CD8-positive, alpha-beta T cell (primary cell): ENCODE measurements at regions of chr4 and their contacts with region 1.

Region 1: DNA sequence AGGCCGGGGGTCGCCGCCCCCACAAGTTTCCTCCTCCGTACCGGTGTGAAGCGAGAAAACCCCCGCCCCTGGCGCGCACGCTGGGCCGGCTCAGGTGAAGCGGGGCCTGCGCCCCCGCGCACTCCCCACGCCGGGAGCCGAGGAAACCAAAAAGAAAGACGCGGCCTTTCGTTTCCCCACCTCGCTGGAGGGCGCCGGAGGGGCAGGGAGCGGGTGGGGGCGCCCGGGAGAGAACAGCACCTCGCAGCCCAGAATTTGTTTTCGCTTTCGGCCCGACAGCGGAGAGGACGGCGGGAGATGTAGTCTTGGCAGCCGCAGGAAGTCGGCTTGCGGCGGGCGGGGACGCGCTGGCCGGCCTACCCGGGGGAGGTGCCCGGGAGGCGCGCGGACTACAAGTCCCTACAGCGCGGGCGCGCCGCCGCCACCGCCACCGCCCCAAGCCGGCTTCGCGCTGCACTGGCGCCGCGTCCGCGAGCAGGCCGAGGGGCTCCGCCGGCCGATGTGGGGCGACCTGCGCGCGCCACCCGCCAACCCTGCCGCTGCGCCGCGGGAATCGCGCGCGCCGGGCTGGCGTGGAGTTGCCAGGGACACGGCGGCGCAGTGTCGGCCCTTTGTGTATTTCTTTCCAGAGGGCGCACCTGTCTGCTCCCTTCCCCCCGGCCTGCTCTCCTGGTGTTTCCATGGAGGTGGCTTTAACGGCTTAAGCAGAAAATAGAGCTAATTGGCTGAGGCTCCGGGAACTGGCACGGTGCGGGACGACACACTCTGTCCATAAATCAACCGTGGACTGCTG is at the start of gene OTUD4:
- DNase-seq: peak; percentile 91 to 98 (median 94)
- ATAC-seq: peak; percentile 82
- H3K4me3 ChIP-seq: peak within 1 kb of the TSS; percentile 69 to 79
- H3K4me3 Mint-ChIP-seq: peak within 1 kb of the TSS; percentile 93
- H3K27ac ChIP-seq: peak within 1 kb of the TSS; percentile 87 to 94
- H3K27ac Mint-ChIP-seq: peak within 1 kb of the TSS; percentile 96
- H3K4me1 ChIP-seq: peaks cover 27% of the 10 kb centered on the region
- H3K4me1 Mint-ChIP-seq: peaks cover 41% of the 10 kb centered on the region
- H3K27me3 ChIP-seq: no peaks in the 10 kb centered on the region
- H3K27me3 Mint-ChIP-seq: no peaks in the 10 kb centered on the region
- CTCF ChIP-seq: no peak
- total RNA-seq, gene OTUD4: 67.5 to 70.6 TPM

Region 2: GRCh38 chr4:143184217-143185116 is 1996.0 kb before region 1 on chr4 and contains the start of gene USP38:
- CTCF ChIA-PET with region 1: no interaction called
- POLR2A ChIA-PET with region 1: no interaction called
- intact Hi-C with region 1: loop called in 1 of 2 experiments (anchors 5 kb)
- DNase-seq: peak; percentile 69 to 94 (median 85)
- ATAC-seq: peak; percentile 82
- H3K4me3 ChIP-seq: peak within 1 kb of the TSS; percentile 48 to 86
- H3K4me3 Mint-ChIP-seq: peak within 1 kb of the TSS; percentile 90
- H3K27ac ChIP-seq: peak within 1 kb of the TSS; percentile 91 to 93
- H3K27ac Mint-ChIP-seq: peak within 1 kb of the TSS; percentile 96
- H3K4me1 ChIP-seq: peaks cover 39% of the 10 kb centered on the region
- H3K4me1 Mint-ChIP-seq: peaks cover 61% of the 10 kb centered on the region
- H3K27me3 ChIP-seq: no peaks in the 10 kb centered on the region
- H3K27me3 Mint-ChIP-seq: no peaks in the 10 kb centered on the region
- CTCF ChIP-seq: no peak
- total RNA-seq, gene USP38: 38.4 to 40.2 TPM

Region 3: DNA sequence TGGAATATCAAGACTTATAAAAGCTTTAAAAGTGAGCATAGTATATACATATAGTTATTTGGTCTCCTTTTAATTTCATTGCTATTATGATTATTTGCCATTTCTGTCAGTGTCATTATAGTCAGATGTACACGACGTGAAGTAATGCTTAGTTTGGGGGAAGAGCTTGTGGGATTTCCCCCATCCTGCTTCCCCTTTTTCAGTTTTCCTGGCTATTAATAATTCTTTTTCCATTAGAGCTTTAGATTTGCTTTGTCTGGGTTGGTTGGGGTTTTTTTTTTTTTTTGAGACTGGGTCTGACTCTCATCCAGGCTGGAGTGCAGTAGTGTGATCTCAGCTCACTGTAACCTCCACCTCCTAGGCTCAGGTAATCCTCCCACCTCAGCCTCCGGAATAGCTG is 77.0 kb before region 1 on chr4:
- CTCF ChIA-PET with region 1: interaction called, 3 read pairs
- POLR2A ChIA-PET with region 1: interaction called, 29 read pairs
- intact Hi-C with region 1: loop called (anchors 1 kb)
- DNase-seq: no peak
- ATAC-seq: no peak
- H3K4me3 ChIP-seq: no peak overlapping the region
- H3K4me3 Mint-ChIP-seq: no peak overlapping the region
- H3K27ac ChIP-seq: no peak overlapping the region
- H3K27ac Mint-ChIP-seq: no peak overlapping the region
- H3K4me1 ChIP-seq: peaks cover 33% of the 10 kb centered on the region
- H3K4me1 Mint-ChIP-seq: peaks cover 31% of the 10 kb centered on the region
- H3K27me3 ChIP-seq: no peaks in the 10 kb centered on the region
- H3K27me3 Mint-ChIP-seq: no peaks in the 10 kb centered on the region
- CTCF ChIP-seq: no peak

Region 4: GRCh38 chr4:145170223-145170622 is 10.3 kb before region 1 on chr4:
- CTCF ChIA-PET with region 1: interaction called, 3 read pairs
- POLR2A ChIA-PET with region 1: interaction called, 14 read pairs
- intact Hi-C with region 1: no loop called
- DNase-seq: no peak
- ATAC-seq: no peak
- H3K4me3 ChIP-seq: no peak overlapping the region
- H3K4me3 Mint-ChIP-seq: no peak overlapping the region
- H3K27ac ChIP-seq: no peak overlapping the region
- H3K27ac Mint-ChIP-seq: no peak overlapping the region
- H3K4me1 ChIP-seq: no peaks in the 10 kb centered on the region
- H3K4me1 Mint-ChIP-seq: peaks cover 37% of the 10 kb centered on the region
- H3K27me3 ChIP-seq: no peaks in the 10 kb centered on the region
- H3K27me3 Mint-ChIP-seq: no peaks in the 10 kb centered on the region
- CTCF ChIP-seq: no peak

Region 5: DNA sequence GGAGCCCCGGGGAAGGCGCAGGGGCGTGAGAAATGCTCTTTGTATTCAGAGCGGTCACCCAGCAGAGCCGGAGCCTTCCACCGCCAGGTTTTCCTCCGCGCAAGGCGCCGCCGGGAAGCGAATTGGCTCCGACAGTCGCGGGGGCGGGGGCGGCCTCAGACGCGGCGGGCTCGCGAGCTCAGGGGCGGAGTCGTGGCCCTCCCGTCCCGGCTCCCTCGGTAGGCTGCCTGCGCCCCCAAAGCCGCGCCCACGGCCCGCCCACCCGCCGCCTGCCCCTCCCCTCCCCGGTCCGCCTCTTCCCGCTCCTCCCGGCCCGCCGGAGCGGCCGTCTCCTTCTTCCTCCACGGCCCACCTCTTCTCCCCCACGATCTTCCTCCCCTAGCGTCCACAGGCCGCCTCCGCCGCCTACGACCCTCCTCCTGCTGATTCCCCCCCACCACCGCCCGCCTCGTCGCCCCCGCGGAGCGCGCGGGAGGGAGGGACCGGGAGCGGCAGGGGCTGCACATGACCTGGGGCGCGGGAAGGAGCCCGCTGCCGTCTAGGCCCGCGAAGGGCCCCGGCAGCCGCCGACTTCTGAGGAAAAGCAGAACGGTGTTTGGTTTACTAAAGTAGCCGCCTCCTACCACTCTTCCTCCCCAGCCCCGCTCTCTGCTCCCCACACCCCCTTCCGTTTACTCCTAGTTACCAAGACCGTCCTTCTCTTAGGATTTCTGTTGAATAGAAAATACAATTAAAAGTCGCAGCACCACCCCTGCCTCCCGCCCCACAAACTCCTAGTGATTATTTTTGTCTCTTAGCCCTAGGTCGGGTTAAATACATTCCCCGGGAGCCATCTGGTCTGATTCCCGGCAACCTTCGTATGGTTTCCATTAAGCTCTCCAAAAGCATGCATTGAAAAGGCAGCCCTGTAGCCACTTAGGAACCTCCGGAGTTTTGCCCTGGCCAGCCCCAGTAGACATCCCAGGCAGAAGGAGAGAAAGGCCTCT is 552.7 kb after region 1 on chr4:
- CTCF ChIA-PET with region 1: no interaction called
- POLR2A ChIA-PET with region 1: no interaction called
- intact Hi-C with region 1: loop called (anchors 2 to 10 kb)
- DNase-seq: peak; percentile 58 to 92 (median 83)
- ATAC-seq: peak; percentile 98
- H3K4me3 ChIP-seq: peak overlapping the region; percentile 71 to 73
- H3K4me3 Mint-ChIP-seq: peak overlapping the region; percentile 80
- H3K27ac ChIP-seq: peak overlapping the region in 1 of 2 experiments; percentile 45
- H3K27ac Mint-ChIP-seq: peak overlapping the region; percentile 29
- H3K4me1 ChIP-seq: peaks cover 3% of the 10 kb centered on the region
- H3K4me1 Mint-ChIP-seq: peaks cover 9% of the 10 kb centered on the region
- H3K27me3 ChIP-seq: no peaks in the 10 kb centered on the region
- H3K27me3 Mint-ChIP-seq: peaks cover 4% of the 10 kb centered on the region
- CTCF ChIP-seq: no peak